AG04449 (cell line): ENCODE measurements at regions of chr15 and their contacts with region 1.

Region 1: DNA sequence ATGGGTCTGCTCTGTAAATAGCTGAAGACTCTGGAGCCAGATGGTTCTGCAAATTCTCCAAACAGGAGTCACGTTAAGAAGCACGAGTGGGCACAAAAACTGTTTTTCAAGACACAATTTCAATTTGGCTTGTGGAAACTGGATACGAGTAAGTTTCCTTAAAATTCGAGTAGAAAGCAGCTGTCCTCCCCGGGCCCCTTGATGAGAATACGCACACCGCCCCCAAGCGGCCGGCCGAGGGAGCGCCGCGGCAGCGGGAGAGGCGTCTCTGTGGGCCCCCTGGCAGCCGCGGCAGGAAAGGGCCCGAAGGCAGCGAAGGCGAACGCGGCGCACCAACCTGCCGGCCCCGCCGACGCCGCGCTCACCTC is 778 bp upstream of the THBS1 start:
- DNase-seq: peak; percentile 98
- H3K4me3 ChIP-seq: peak overlapping the region; percentile 95
- CTCF ChIP-seq: peak; percentile 93

Region 2: GRCh38 chr15:39171944-39172368 is 408.1 kb before region 1 on chr15:
- CTCF ChIA-PET with region 1: interaction called, 18 read pairs
- POLR2A ChIA-PET with region 1: interaction called, 59 read pairs
- DNase-seq: peak; percentile 90
- H3K4me3 ChIP-seq: no peak overlapping the region
- CTCF ChIP-seq: peak; percentile 44

Region 3: DNA sequence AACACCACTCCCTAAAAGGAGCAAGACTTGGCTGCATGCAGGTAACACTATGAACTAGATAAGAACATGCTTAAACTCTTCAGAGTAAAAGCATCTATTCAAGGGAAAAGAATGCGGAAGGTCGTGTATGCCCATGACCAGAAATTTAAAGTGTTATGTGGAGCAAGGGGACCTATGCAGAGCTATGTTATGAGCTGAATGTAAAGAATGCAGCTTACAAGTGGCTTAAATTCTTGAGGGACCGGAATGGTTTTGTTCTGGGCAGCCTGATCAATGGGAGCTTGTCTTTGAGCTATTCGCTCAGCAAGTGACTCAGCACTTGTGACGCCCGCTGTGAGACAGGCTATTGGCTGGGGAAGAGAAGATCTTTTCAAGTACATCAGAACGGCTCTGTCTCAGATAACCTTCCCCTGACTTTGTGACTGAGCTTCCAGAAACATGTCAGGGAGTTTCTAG is 366.7 kb before region 1 on chr15:
- CTCF ChIA-PET with region 1: no interaction called
- POLR2A ChIA-PET with region 1: interaction called, 19 read pairs
- DNase-seq: peak; percentile 99
- H3K4me3 ChIP-seq: no peak overlapping the region
- CTCF ChIP-seq: no peak

Region 4: GRCh38 chr15:39287322-39288195 is 292.5 kb before region 1 on chr15:
- CTCF ChIA-PET with region 1: interaction called, 4 read pairs
- POLR2A ChIA-PET with region 1: interaction called, 38 read pairs
- DNase-seq: no peak
- H3K4me3 ChIP-seq: no peak overlapping the region
- CTCF ChIP-seq: no peak

Region 5: GRCh38 chr15:39404767-39405181 is 175.3 kb before region 1 on chr15:
- CTCF ChIA-PET with region 1: no interaction called
- POLR2A ChIA-PET with region 1: interaction called, 26 read pairs
- DNase-seq: peak; percentile 95
- H3K4me3 ChIP-seq: no peak overlapping the region
- CTCF ChIP-seq: no peak

Region 6: DNA sequence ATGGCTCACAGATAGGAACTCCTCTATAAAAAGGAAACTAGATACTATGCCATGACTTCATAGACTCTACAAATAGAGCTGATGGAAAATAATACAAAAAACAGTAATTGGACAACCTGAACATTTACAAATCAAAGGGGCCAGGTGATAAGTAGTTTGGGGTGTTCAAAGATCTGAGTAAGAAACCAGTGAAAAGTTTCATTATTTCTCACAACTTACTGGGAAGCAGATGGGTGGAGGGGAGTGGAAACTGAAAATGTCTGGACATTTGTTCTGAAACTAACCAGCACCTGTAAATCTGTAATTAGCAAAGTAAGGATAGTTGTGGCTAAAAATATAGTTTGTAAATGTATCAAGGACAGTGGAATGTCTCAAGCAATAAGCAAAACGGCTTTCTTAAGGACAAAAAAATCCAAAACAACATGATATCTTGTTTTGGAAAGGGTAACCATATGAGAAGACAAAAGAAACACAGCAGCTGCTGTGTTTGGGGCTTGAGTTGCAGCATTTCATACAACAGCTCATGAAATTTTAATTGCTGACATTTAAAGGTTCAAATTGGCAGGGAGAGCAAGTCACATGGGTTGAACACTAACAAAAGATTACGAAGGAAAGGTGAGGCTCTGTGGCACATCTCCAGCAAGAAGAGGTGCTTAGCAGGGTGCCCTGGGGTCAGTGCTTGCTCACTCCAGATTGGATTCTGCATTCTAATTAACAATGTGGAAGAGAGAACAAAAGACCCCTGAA is 26.0 kb before region 1 on chr15:
- CTCF ChIA-PET with region 1: no interaction called
- POLR2A ChIA-PET with region 1: no interaction called
- DNase-seq: no peak
- H3K4me3 ChIP-seq: no peak overlapping the region
- CTCF ChIP-seq: no peak

Region 7: DNA sequence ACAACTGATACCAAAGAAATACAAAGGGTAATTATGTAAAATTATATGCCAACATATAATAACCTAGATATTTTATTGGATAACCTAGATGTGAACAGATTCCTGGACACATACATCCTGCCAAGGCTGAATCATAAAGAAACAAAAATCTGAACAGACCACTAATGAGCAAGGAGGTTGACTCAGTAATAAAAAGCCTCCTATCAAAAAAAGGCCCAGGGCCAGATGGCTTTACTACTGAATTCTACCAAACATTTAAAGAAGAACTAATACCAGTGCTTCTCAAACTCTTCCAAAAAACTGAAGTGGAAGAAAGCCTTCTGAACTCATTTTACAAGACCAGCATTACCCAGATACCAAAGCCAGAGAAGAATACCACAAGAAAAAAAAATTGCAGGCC is 33.2 kb after region 1 on chr15:
- CTCF ChIA-PET with region 1: no interaction called
- POLR2A ChIA-PET with region 1: no interaction called
- DNase-seq: no peak
- H3K4me3 ChIP-seq: no peak overlapping the region
- CTCF ChIP-seq: no peak

Region 8: GRCh38 chr15:39756806-39757522 is 176.9 kb after region 1 on chr15:
- CTCF ChIA-PET with region 1: interaction called, 11 read pairs
- POLR2A ChIA-PET with region 1: interaction called, 4 read pairs
- DNase-seq: peak; percentile 36
- H3K4me3 ChIP-seq: no peak overlapping the region
- CTCF ChIP-seq: peak; percentile 28